Gastrocnemius medialis (tissue), 4 donors: ENCODE measurements at regions of chr3 and their contacts with region 1.

Region 1: GRCh38 chr3:102224128-102224527 is 210.7 kb upstream of the ZPLD1 start:
- DNase-seq: no peak
- ATAC-seq: no peak
- H3K4me3 ChIP-seq: no peak overlapping the region
- H3K27ac ChIP-seq: no peak overlapping the region
- H3K4me1 ChIP-seq: no peaks in the 10 kb centered on the region
- H3K27me3 ChIP-seq: no peaks in the 10 kb centered on the region
- CTCF ChIP-seq: peak in 3 of 5 experiments; percentile 22 to 31 (median 25)
- POLR2A ChIP-seq: no peak

Region 2: GRCh38 chr3:101414121-101414520 is 810.0 kb before region 1 on chr3:
- in situ Hi-C with region 1: no loop called
- intact Hi-C with region 1: no loop called
- DNase-seq: no peak
- ATAC-seq: no peak
- H3K4me3 ChIP-seq: no peak overlapping the region
- H3K27ac ChIP-seq: no peak overlapping the region
- H3K4me1 ChIP-seq: peaks cover 0 to 5% of the 10 kb centered on the region in 2 donors
- H3K27me3 ChIP-seq: no peaks in the 10 kb centered on the region
- CTCF ChIP-seq: no peak
- POLR2A ChIP-seq: no peak

Region 3: GRCh38 chr3:102006812-102007485 is 217.2 kb before region 1 on chr3:
- in situ Hi-C with region 1: loop called in 1 of 4 experiments (anchors 25 kb)
- intact Hi-C with region 1: no loop called
- DNase-seq: peak in 1 of 2 donors; percentile 11
- ATAC-seq: peak in 1 of 2 donors; percentile 65
- H3K4me3 ChIP-seq: no peak overlapping the region
- H3K27ac ChIP-seq: no peak overlapping the region
- H3K4me1 ChIP-seq: no peaks in the 10 kb centered on the region
- H3K27me3 ChIP-seq: no peaks in the 10 kb centered on the region
- CTCF ChIP-seq: no peak
- POLR2A ChIP-seq: no peak

Region 4: DNA sequence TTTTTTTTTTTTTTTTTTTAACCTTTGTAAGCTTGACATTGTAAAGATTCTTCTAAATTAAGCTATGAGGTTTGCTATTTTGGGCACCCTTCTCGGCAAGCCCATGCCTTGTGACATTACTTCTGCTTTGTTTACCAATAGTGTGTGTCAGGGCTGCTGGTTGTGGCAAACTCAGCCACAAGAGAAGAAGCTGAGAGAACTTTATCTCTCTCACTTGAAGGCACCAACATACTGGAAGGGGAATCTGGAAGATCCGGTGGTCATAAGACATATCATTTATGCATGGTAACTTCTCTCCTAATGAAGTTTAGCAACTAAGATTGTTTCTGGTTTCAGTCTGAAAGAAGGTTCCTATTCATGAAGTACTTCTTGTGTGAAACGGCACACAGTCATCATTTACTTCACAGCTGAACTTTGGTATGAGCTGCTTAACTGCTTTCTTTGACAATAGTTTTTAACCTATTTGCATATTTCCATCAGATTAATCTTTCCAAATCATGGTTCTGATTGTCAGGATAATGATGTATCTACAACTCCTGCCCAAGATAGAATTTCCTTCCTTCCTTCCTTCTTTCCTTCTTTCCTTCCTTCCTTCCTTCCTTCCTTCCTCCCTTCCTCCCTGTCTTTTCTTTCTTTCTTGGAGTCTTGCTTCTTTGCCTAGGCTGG is 185.5 kb before region 1 on chr3:
- in situ Hi-C with region 1: no loop called
- intact Hi-C with region 1: no loop called
- DNase-seq: no peak
- ATAC-seq: no peak
- H3K4me3 ChIP-seq: no peak overlapping the region
- H3K27ac ChIP-seq: no peak overlapping the region
- H3K4me1 ChIP-seq: no peaks in the 10 kb centered on the region
- H3K27me3 ChIP-seq: no peaks in the 10 kb centered on the region
- CTCF ChIP-seq: no peak
- POLR2A ChIP-seq: no peak

Region 5: DNA sequence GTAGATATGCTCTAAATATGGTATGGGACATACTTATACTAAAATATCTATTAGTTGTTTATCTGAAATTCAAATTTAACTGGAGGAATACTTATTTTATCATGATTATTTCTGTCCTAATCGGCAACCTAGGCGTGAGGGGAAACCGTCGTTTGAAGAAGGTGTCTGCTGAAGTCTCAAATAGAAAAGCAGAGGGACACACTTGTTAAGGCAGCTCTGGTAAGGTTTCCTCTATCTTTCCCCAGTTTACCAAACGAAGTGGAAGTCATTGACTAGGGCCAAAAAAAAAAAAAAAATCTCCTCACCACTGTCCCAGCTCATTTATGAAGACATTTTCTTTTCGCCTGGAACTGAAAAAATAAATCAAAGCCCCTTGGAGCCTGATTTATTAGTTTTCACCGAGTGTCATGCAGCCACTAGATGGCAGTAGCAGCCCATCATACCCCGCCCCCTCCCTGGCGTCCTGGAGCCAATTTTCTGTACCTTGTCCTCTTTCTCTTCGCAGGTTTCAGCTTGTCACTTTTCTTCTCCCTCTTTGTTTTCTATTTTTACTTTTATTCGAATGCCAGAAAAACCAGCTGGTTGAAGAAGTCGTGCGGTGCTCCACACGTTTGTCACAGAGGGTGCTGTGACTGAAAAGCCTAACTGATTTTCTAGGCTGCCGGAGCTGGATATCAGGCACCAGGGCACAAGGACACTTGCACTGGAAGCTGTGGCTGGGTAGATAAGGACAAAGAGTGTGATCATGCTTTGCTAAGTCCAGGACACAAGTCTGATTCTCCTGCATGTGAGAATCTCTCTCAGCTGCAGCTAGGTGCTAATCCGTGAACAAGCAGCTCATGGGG is 449.4 kb after region 1 on chr3:
- in situ Hi-C with region 1: no loop called
- intact Hi-C with region 1: no loop called
- DNase-seq: peak; percentile 2 to 15
- ATAC-seq: peak in 1 of 2 donors; percentile 71
- H3K4me3 ChIP-seq: peak overlapping the region in 2 of 4 donors; percentile 8 to 48
- H3K27ac ChIP-seq: no peak overlapping the region
- H3K4me1 ChIP-seq: no peaks in the 10 kb centered on the region
- H3K27me3 ChIP-seq: no peaks in the 10 kb centered on the region
- CTCF ChIP-seq: peak; percentile 36 to 79 (median 55)
- POLR2A ChIP-seq: no peak